Naive thymus-derived CD4-positive, alpha-beta T cell (primary cell): ENCODE measurements at regions of chr1 and their contacts with region 1.

Region 1: GRCh38 chr1:23979878-23980724 is at the start of gene SRSF10:
- DNase-seq: peak; percentile 91 to 99 (median 98)
- ATAC-seq: peak; percentile 97
- H3K4me3 ChIP-seq: peak within 1 kb of the TSS; percentile 75
- H3K4me3 Mint-ChIP-seq: peak within 1 kb of the TSS; percentile 87 to 98 (median 94)
- H3K27ac ChIP-seq: peak within 1 kb of the TSS; percentile 98
- H3K27ac Mint-ChIP-seq: peak within 1 kb of the TSS; percentile 94 to 99 (median 96)
- H3K4me1 ChIP-seq: peaks cover 31 to 43% of the 10 kb centered on the region in 2 donors
- H3K4me1 Mint-ChIP-seq: peaks cover 39 to 57% (median 53%) of the 10 kb centered on the region in 7 donors
- H3K27me3 ChIP-seq: no peaks in the 10 kb centered on the region
- H3K27me3 Mint-ChIP-seq: peaks cover 0 to 4% (median 0%) of the 10 kb centered on the region in 5 donors
- total RNA-seq, gene SRSF10: 170 to 252 (median 193) TPM

Region 2: DNA sequence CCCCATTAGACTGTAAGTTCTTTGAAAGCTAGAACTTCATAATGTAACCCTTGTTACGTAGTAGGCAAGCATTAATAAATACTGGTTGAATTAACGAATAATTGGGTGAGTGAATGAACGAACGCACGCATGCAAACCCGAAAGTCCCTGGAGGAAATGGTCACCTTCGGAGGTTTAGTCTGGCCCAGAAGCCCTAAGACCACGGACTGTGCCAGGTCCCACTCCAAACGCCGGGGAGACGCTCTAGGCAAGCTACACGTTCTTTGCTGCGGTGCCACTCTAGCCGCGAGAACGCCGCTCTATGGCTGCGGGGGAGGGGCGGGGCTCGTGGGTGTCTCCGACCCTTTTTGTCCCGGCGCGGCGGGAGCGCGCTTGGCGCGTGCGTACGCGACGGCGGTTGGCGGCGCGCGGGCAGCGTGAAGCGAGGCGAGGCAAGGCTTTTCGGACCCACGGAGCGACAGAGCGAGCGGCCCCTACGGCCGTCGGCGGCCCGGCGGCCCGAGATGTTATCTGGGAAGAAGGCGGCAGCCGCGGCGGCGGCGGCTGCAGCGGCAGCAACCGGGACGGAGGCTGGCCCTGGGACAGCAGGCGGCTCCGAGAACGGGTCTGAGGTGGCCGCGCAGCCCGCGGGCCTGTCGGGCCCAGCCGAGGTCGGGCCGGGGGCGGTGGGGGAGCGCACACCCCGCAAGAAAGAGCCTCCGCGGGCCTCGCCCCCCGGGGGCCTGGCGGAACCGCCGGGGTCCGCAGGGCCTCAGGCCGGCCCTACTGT is 960.8 kb before region 1 on chr1 and contains the start of gene KDM1A:
- CTCF ChIA-PET with region 1: no interaction called
- POLR2A ChIA-PET with region 1: no interaction called
- intact Hi-C with region 1: loop called in 1 of 2 experiments (anchors 5 kb)
- DNase-seq: peak; percentile 88 to 95 (median 92)
- ATAC-seq: peak; percentile 99
- H3K4me3 ChIP-seq: peak within 1 kb of the TSS; percentile 84
- H3K4me3 Mint-ChIP-seq: peak within 1 kb of the TSS; percentile 87 to 98 (median 98)
- H3K27ac ChIP-seq: peak within 1 kb of the TSS; percentile 76
- H3K27ac Mint-ChIP-seq: peak within 1 kb of the TSS; percentile 86 to 98 (median 93)
- H3K4me1 ChIP-seq: peaks cover 4 to 14% of the 10 kb centered on the region in 2 donors
- H3K4me1 Mint-ChIP-seq: peaks cover 16 to 52% (median 46%) of the 10 kb centered on the region in 7 donors
- H3K27me3 ChIP-seq: no peaks in the 10 kb centered on the region
- H3K27me3 Mint-ChIP-seq: no peaks in the 10 kb centered on the region
- total RNA-seq, gene KDM1A: 40.6 to 56.0 (median 47.7) TPM

Region 3: DNA sequence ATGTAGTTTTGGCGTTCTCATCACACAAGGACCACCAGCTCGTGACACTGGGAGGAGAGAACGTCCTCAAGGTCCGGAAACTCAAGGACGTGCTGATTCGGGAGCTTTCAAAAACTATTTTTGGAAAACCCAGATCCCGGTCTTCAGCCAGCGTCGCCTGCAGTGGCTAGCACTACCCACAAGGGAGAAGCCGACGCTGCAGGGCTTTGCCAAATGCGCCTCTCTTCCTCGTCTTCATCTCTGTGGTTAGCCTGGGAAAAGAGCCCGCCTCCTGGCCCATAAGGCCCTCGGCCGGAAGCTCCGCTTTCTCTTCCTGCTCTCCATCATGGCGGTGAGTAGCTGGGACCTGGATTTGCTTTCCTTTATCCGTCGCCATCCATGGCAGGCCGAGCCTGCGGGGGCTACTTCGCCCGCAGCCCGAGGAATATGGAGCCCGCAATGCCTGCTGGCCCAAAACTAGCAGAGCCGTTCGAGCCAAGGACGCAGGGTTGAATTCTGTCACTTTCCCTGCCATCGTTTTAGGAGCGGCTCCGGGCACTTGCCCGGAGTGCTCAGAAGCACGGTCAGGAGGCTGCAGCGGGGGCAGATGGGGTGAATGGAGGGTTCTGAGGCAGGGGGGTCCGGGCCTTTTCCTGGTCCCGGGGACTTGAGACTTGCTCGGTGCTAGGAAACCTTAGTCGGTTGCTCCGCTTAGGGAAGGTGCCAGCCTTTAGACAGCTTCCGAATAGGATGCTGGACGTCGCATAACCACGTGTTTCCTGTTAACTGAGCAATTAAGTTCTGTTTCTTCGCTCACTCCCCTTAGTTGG is 288.4 kb before region 1 on chr1 and contains the start of gene RPL11:
- CTCF ChIA-PET with region 1: no interaction called
- POLR2A ChIA-PET with region 1: interaction called, 4 read pairs
- intact Hi-C with region 1: loop called in 1 of 2 experiments (anchors 5 kb)
- DNase-seq: peak; percentile 60 to 92 (median 88)
- ATAC-seq: peak; percentile 100
- H3K4me3 ChIP-seq: peak within 1 kb of the TSS; percentile 82
- H3K4me3 Mint-ChIP-seq: peak within 1 kb of the TSS; percentile 87 to 96 (median 94)
- H3K27ac ChIP-seq: peak within 1 kb of the TSS; percentile 88
- H3K27ac Mint-ChIP-seq: peak within 1 kb of the TSS; percentile 87 to 97 (median 93)
- H3K4me1 ChIP-seq: peaks cover 19 to 20% of the 10 kb centered on the region in 2 donors
- H3K4me1 Mint-ChIP-seq: peaks cover 33 to 50% (median 45%) of the 10 kb centered on the region in 7 donors
- H3K27me3 ChIP-seq: no peaks in the 10 kb centered on the region
- H3K27me3 Mint-ChIP-seq: no peaks in the 10 kb centered on the region
- total RNA-seq, gene RPL11: 1,206 to 2,420 (median 2,172) TPM

Region 4: DNA sequence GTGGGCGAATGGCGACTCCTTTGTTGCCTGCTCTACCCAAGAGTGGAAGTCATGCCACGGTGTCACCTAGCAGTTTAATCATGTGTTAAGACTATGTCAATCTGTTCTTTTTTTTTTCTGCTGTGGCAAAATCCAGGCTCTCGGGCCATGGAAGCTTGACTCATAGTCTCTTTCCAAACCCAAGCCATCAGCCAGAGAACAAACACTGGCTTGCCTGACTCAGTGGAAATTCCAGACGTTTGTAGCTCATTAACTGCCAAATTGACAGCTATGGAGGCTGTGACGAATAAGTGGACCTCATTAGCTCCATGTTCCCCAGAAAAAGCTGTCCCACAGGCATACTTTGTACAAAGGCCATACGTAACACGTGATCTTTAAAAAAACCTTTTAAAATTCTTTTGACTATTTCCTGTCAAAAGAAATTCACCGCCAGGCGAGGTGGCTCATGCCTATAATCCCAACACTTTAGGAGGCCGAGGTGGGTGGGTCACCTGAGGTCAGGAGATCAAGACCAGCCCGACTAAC is 28.5 kb before region 1 on chr1:
- CTCF ChIA-PET with region 1: interaction called, 10 read pairs
- POLR2A ChIA-PET with region 1: interaction called, 108 read pairs
- intact Hi-C with region 1: no loop called
- DNase-seq: no peak
- ATAC-seq: no peak
- H3K4me3 ChIP-seq: no peak overlapping the region
- H3K4me3 Mint-ChIP-seq: no peak overlapping the region
- H3K27ac ChIP-seq: no peak overlapping the region
- H3K27ac Mint-ChIP-seq: no peak overlapping the region
- H3K4me1 ChIP-seq: peaks cover 0 to 14% of the 10 kb centered on the region in 2 donors
- H3K4me1 Mint-ChIP-seq: peaks cover 8 to 25% (median 17%) of the 10 kb centered on the region in 7 donors
- H3K27me3 ChIP-seq: no peaks in the 10 kb centered on the region
- H3K27me3 Mint-ChIP-seq: peaks cover 0 to 7% (median 0%) of the 10 kb centered on the region in 5 donors

Region 5: GRCh38 chr1:23964790-23965740 is 15.0 kb before region 1 on chr1:
- CTCF ChIA-PET with region 1: interaction called, 4 read pairs
- POLR2A ChIA-PET with region 1: interaction called, 108 read pairs
- intact Hi-C with region 1: loop called in 1 of 2 experiments (anchors 1 kb)
- DNase-seq: no peak
- ATAC-seq: no peak
- H3K4me3 ChIP-seq: no peak overlapping the region
- H3K4me3 Mint-ChIP-seq: no peak overlapping the region
- H3K27ac ChIP-seq: peak overlapping the region; percentile 30
- H3K27ac Mint-ChIP-seq: peak overlapping the region; percentile 11 to 80 (median 72)
- H3K4me1 ChIP-seq: peaks cover 4 to 20% of the 10 kb centered on the region in 2 donors
- H3K4me1 Mint-ChIP-seq: peaks cover 21 to 73% (median 63%) of the 10 kb centered on the region in 7 donors
- H3K27me3 ChIP-seq: no peaks in the 10 kb centered on the region
- H3K27me3 Mint-ChIP-seq: no peaks in the 10 kb centered on the region

Region 6: GRCh38 chr1:24036088-24036487 is 56.0 kb after region 1 on chr1:
- CTCF ChIA-PET with region 1: no interaction called
- POLR2A ChIA-PET with region 1: no interaction called
- intact Hi-C with region 1: no loop called
- DNase-seq: no peak
- ATAC-seq: no peak
- H3K4me3 ChIP-seq: no peak overlapping the region
- H3K4me3 Mint-ChIP-seq: no peak overlapping the region
- H3K27ac ChIP-seq: no peak overlapping the region
- H3K27ac Mint-ChIP-seq: no peak overlapping the region
- H3K4me1 ChIP-seq: no peaks in the 10 kb centered on the region
- H3K4me1 Mint-ChIP-seq: peaks cover 0 to 2% (median 0%) of the 10 kb centered on the region in 7 donors
- H3K27me3 ChIP-seq: peaks cover 0 to 3% of the 10 kb centered on the region in 2 donors
- H3K27me3 Mint-ChIP-seq: peaks cover 0 to 11% (median 0%) of the 10 kb centered on the region in 5 donors

Region 7: DNA sequence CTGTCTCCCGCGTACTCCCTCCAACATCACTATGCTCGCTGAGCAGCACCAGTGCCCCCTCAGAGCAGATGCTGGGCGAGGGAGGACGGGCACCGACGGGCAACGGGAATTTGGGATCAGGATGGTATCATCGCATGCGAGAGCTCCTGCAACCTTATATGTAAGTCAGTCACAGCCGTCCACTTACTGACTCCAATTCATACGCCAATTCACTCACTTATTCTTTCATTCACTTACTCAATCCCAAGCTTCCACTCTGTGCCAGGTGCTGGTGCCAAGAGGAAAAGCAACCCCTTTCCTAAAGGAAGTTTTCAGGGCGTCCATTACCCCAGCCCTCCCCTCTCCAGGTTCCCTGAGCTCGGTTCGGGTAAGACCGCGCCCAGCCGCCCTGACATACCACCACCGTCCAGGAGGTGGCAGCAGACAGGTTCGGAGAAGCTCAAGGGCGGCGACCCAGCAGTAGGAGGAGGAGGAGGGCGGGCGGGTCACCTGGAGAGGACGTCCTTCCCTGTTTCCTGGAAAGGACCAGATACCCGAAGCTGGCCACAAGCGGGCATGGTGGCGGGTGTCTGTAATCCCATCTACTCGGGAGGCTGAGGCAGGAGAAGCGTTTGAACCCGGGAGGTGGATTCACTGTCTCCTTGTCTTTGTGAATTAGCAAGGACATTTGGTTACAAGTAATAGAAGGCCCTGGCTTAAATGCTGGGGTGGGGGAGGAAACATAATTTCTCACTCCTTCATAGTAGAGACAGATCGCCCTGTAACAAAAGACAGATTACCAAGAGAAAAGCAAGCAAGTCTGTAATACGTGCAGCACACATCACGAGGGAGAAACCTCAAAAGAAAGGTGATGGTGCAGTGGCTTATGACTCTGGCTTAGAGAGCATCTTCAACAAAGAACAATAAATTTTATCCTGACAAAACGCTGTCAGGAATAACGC is 170.4 kb after region 1 on chr1:
- CTCF ChIA-PET with region 1: no interaction called
- POLR2A ChIA-PET with region 1: interaction called, 4 read pairs
- intact Hi-C with region 1: loop called in 1 of 2 experiments (anchors 5 kb)
- DNase-seq: peak; percentile 56 to 89 (median 77)
- ATAC-seq: peak; percentile 96
- H3K4me3 ChIP-seq: peak overlapping the region; percentile 34
- H3K4me3 Mint-ChIP-seq: peak overlapping the region; percentile 32 to 82 (median 71)
- H3K27ac ChIP-seq: no peak overlapping the region
- H3K27ac Mint-ChIP-seq: peak overlapping the region in 2 of 9 donors; percentile 54 to 61
- H3K4me1 ChIP-seq: peaks cover 4 to 10% of the 10 kb centered on the region in 2 donors
- H3K4me1 Mint-ChIP-seq: peaks cover 9 to 18% (median 14%) of the 10 kb centered on the region in 7 donors
- H3K27me3 ChIP-seq: no peaks in the 10 kb centered on the region
- H3K27me3 Mint-ChIP-seq: peaks cover 27 to 51% (median 39%) of the 10 kb centered on the region in 5 donors